PC-9 (cell line): ENCODE measurements at regions of chr7 and their contacts with region 1.

Region 1: GRCh38 chr7:74051629-74052410 is 23.8 kb downstream of the ELN start:
- DNase-seq: peak; percentile 43 to 78
- H3K4me3 ChIP-seq: no peak overlapping the region
- H3K27ac ChIP-seq: no peak overlapping the region
- H3K4me1 ChIP-seq: no peaks in the 10 kb centered on the region
- H3K27me3 ChIP-seq: peaks cover 19% of the 10 kb centered on the region
- CTCF ChIP-seq: peak; percentile 65

Region 2: GRCh38 chr7:73992101-73992562 is 59.7 kb before region 1 on chr7:
- CTCF ChIA-PET with region 1: no interaction called
- POLR2A ChIA-PET with region 1: no interaction called
- intact Hi-C with region 1: no loop called
- DNase-seq: no peak
- H3K4me3 ChIP-seq: no peak overlapping the region
- H3K27ac ChIP-seq: no peak overlapping the region
- H3K4me1 ChIP-seq: no peaks in the 10 kb centered on the region
- H3K27me3 ChIP-seq: no peaks in the 10 kb centered on the region
- CTCF ChIP-seq: no peak

Region 3: GRCh38 chr7:74068393-74069085 is 16.7 kb after region 1 on chr7:
- CTCF ChIA-PET with region 1: no interaction called
- POLR2A ChIA-PET with region 1: no interaction called
- intact Hi-C with region 1: no loop called
- DNase-seq: no peak
- H3K4me3 ChIP-seq: no peak overlapping the region
- H3K27ac ChIP-seq: no peak overlapping the region
- H3K4me1 ChIP-seq: no peaks in the 10 kb centered on the region
- H3K27me3 ChIP-seq: no peaks in the 10 kb centered on the region
- CTCF ChIP-seq: no peak

Region 4: DNA sequence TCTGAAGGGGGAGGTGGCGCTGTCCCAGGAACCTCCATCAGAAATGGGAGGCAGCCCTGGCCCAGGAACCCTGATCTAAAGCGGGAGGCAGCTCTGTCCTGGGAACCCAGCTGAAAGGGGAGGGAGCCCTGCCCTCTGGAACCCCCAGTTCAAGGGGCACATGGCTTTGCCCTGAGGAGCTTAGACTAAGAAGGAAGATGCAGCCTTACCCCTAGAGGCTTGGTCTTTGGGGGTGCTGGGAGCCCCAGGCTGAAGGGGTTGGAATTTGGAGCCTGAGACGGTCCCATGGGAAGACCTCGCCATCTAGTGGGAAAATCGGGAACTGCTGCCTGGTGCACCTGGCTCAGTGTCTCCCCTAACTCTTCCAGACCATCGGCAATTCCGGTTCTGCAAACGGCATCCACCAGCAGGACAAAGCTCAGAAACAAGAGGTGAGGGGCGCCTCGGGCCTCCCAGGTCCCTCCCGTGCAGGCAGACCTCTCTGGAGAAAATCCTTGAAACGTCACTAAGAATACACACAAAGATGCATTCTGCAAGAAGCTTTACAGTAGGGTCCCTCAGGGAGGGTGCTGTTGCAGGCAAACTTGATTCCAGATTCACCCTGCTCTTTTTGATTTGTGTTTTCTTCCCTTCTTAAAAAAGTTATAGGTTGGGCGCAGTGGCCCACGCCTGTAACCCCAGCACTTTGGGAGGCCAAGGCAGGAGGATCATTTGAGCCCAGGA is 349.5 kb after region 1 on chr7:
- CTCF ChIA-PET with region 1: no interaction called
- POLR2A ChIA-PET with region 1: no interaction called
- intact Hi-C with region 1: loop called (anchors 2 kb)
- DNase-seq: peak; percentile 51 to 80
- H3K4me3 ChIP-seq: no peak overlapping the region
- H3K27ac ChIP-seq: no peak overlapping the region
- H3K4me1 ChIP-seq: no peaks in the 10 kb centered on the region
- H3K27me3 ChIP-seq: no peaks in the 10 kb centered on the region
- CTCF ChIP-seq: peak; percentile 98